ENCODE measurements at regions of chr15 and their contacts with region 1.

Region 1: DNA sequence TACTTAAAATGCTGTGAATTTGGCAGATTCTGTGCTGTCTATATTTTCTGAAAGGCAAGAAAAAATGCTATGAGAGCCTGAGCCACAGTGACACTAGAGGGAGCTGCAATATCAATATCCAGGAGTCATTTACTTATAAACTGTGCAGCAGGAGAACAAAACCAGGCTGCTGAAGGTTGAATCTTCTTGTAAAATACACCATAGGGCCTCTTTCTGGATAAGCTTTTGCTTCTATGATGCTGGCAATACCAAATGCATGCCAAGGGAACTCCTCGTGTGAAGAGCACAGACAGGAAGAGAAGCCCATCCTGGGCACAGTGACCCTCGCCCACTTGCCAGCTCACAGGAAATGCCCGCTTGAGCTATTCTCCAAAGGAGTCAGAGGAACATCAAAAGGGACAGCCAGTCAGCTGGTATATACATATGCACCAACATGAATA is 48.0 kb upstream of the TSPAN3 start:
- DNase-seq: peak; percentile 28
- H3K4me3 ChIP-seq: no peak overlapping the region
- H3K27me3 ChIP-seq: no peaks in the 10 kb centered on the region
- CTCF ChIP-seq: peak; percentile 81

Region 2: DNA sequence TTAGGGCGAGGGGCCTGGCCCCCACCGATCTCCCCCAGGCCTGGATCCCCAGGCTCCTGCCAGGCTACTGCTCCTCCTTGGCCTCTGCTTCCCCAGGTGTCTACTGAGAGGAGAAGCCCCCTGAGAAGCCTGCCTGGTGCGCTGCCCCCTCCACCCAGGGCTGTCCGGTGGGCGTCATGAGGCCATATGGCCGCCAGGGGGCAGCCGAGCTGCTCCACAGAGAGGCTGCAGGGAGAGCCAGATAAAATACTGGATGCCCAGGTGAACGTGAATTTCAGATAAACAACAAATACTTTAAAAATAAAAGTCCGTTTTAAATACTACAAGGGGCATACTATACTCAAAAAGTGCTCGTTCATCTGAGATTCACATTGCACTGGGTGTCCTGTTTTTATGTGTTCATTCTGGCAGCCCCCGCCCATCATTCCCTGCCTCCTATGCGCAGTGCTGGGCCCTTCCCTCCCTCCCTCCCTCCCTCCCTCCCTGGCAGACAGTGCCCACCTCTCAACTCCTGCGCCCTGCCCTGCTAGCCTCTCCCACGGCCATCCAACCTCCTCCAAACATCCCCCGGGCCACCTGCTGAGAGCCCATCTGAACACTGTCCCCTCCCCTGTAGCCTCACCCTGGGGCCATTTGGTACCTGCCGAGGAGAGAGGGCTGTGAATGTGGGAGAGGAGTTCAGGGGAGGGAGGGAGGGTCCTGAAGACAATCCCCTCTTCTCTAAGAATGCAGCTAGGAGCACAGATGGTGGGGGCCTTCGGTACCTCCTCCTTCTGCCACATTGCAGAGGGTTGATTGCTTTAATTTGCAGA is 94.4 kb before region 1 on chr15:
- CTCF ChIA-PET with region 1: interaction called, 12 read pairs
- POLR2A ChIA-PET with region 1: no interaction called
- DNase-seq: no peak
- H3K4me3 ChIP-seq: no peak overlapping the region
- H3K27me3 ChIP-seq: no peaks in the 10 kb centered on the region
- CTCF ChIP-seq: peak; percentile 96

Region 3: GRCh38 chr15:77107531-77108355 is 11.2 kb before region 1 on chr15:
- CTCF ChIA-PET with region 1: interaction called, 32 read pairs
- POLR2A ChIA-PET with region 1: interaction called, 3 read pairs
- DNase-seq: no peak
- H3K4me3 ChIP-seq: no peak overlapping the region
- H3K27me3 ChIP-seq: no peaks in the 10 kb centered on the region
- CTCF ChIP-seq: peak; percentile 78

Region 4: GRCh38 chr15:77130315-77130930 is 11.5 kb after region 1 on chr15:
- CTCF ChIA-PET with region 1: interaction called, 19 read pairs
- POLR2A ChIA-PET with region 1: no interaction called
- DNase-seq: no peak
- H3K4me3 ChIP-seq: no peak overlapping the region
- H3K27me3 ChIP-seq: no peaks in the 10 kb centered on the region
- CTCF ChIP-seq: no peak

Region 5: DNA sequence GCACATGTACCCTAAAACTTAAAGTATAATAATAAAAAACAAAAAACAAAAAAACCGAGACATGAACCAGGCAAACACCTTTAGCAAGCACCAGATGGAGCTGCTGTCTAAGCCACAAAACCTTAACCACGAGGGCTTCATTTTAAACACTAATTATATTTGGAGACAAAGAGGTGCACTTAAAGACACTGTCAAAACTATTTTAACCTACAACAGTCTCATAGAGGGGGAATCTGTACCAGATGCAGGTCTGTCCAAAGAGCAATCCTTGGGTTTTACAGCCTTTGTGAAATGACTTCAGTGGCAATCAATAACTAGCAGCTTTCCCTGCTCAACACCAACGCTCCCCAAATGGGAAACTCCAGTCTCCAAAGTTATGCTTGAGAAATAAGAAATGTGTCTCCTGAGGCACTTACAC is 67.7 kb after region 1 on chr15:
- CTCF ChIA-PET with region 1: interaction called, 17 read pairs
- POLR2A ChIA-PET with region 1: no interaction called
- DNase-seq: no peak
- H3K4me3 ChIP-seq: no peak overlapping the region
- H3K27me3 ChIP-seq: no peaks in the 10 kb centered on the region
- CTCF ChIP-seq: peak; percentile 52

Region 6: GRCh38 chr15:77496710-77497103 is 377.8 kb after region 1 on chr15:
- CTCF ChIA-PET with region 1: interaction called, 48 read pairs
- POLR2A ChIA-PET with region 1: no interaction called
- DNase-seq: peak; percentile 94
- H3K4me3 ChIP-seq: no peak overlapping the region
- H3K27me3 ChIP-seq: no peaks in the 10 kb centered on the region
- CTCF ChIP-seq: peak; percentile 98